ENCODE measurements at regions of chr1 and their contacts with region 1.

Region 1: GRCh38 chr1:231357831-231358354 is 19.8 kb downstream of the SPRTN start:
- DNase-seq: no peak
- H3K4me3 ChIP-seq: no peak overlapping the region
- H3K27ac ChIP-seq: no peak overlapping the region
- H3K4me1 ChIP-seq: no peaks in the 10 kb centered on the region
- H3K27me3 ChIP-seq: no peaks in the 10 kb centered on the region
- CTCF ChIP-seq: peak; percentile 59

Region 2: GRCh38 chr1:231534703-231535159 is 176.8 kb after region 1 on chr1:
- intact Hi-C with region 1: loop called (anchors 10 kb)
- DNase-seq: no peak
- H3K4me3 ChIP-seq: no peak overlapping the region
- H3K27ac ChIP-seq: no peak overlapping the region
- H3K4me1 ChIP-seq: peaks cover 3% of the 10 kb centered on the region
- H3K27me3 ChIP-seq: no peaks in the 10 kb centered on the region
- CTCF ChIP-seq: no peak

Region 3: DNA sequence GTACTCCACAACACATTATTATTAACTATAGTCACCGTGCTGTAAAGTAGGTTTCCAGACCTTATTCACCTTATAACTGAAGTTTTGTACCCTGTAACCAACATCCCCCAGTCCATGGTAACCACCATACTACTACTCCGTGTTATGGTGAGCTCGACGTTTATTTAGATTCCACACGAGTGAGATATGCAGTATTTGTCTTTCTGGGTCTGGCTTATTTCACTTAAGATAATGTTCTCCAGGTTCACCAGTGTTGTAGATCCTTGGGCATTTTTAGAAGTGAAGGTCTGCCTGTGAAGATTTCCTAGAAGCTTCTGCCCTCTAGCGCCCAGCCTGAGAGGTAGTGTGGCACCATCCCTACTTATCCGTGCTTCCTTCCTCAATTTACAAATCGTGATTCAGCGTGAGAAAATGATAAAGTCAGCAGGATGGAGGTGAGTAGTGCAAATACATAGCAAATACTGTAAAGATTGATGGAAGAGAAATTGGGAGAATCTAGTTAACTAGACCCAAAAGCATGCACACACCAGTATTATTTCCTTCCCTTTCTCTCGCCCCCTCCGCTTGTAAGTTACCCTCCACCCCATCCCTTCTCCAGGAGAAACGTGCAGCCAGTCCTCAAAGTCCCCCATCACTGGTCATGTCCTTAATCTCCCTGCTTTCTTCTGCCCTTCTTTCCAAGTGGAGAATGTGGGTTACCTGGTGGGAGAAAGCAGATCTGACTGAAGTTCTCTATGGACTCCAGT is 232.7 kb after region 1 on chr1:
- intact Hi-C with region 1: loop called (anchors 2 kb)
- DNase-seq: peak; percentile 52
- H3K4me3 ChIP-seq: no peak overlapping the region
- H3K27ac ChIP-seq: no peak overlapping the region
- H3K4me1 ChIP-seq: no peaks in the 10 kb centered on the region
- H3K27me3 ChIP-seq: no peaks in the 10 kb centered on the region
- CTCF ChIP-seq: peak; percentile 65